CD14-positive monocyte (primary cell): ENCODE measurements at regions of chr1 and their contacts with region 1.

Region 1: GRCh38 chr1:2412519-2413233 is at the start of gene PEX10:
- DNase-seq: peak; percentile 93 to 94 (median 94)
- H3K4me3 ChIP-seq: peak within 1 kb of the TSS; percentile 60 to 91 (median 74)
- H3K4me3 Mint-ChIP-seq: peak within 1 kb of the TSS; percentile 76 to 81
- H3K27ac ChIP-seq: peak within 1 kb of the TSS; percentile 27 to 92
- H3K27ac Mint-ChIP-seq: peak within 1 kb of the TSS; percentile 50 to 86 (median 77)
- H3K4me1 ChIP-seq: peaks cover 24 to 46% of the 10 kb centered on the region in 2 donors
- H3K4me1 Mint-ChIP-seq: peaks cover 19% of the 10 kb centered on the region
- H3K27me3 ChIP-seq: peaks cover 0 to 13% of the 10 kb centered on the region in 2 donors
- H3K27me3 Mint-ChIP-seq: peaks cover 28 to 36% (median 28%) of the 10 kb centered on the region in 3 donors
- CTCF ChIP-seq: no peak
- polyA plus RNA-seq, gene PEX10: 7.0 to 10.5 (median 8.2) TPM

Region 2: DNA sequence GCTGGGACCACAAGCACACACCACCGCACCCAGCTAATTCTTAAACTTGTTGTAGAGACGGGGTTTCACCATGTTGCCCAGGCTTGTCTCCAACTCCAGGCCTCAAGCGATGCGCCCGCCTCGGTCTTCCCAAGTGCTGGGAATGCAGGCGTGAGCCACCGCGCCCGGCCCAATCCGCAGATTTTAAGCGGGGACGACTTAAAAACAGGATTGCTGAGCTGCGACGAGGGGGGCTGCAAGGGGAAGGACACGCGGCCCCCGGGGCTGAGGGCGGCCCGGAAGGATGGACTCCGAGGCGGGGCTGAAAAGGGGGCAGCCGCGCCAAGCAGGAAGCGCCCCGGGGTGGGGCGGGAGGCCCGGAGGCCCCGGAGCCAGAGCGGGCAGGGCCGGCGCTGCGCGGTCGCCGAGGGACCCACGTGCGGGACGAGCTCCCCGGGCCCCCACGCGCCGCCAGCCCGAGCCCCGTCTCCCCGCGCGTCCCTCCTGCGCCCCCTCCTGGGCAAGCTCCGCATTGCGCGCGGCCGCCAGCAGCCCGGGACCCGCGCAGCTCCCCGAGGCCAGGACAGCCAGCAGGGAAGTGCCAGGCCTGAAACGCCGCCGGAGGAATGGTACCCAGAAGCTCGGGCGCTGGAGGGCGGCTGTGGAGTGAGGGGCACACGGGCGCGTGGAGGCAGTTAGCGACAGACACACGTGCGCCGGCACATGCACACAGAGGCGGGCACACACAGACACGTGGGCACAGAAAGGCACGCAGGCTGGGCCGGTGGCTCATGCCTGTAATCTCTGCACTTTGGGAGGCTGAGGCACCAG is 368.0 kb before region 1 on chr1:
- intact Hi-C with region 1: no loop called
- DNase-seq: peak; percentile 33 to 61 (median 41)
- H3K4me3 ChIP-seq: no peak overlapping the region
- H3K4me3 Mint-ChIP-seq: peak overlapping the region in 1 of 2 donors; percentile 83
- H3K27ac ChIP-seq: no peak overlapping the region
- H3K27ac Mint-ChIP-seq: no peak overlapping the region
- H3K4me1 ChIP-seq: peaks cover 6 to 15% of the 10 kb centered on the region in 2 donors
- H3K4me1 Mint-ChIP-seq: peaks cover 10% of the 10 kb centered on the region
- H3K27me3 ChIP-seq: peaks cover 9 to 57% of the 10 kb centered on the region in 2 donors
- H3K27me3 Mint-ChIP-seq: peaks cover 44 to 62% (median 59%) of the 10 kb centered on the region in 3 donors
- CTCF ChIP-seq: peak; percentile 86

Region 3: DNA sequence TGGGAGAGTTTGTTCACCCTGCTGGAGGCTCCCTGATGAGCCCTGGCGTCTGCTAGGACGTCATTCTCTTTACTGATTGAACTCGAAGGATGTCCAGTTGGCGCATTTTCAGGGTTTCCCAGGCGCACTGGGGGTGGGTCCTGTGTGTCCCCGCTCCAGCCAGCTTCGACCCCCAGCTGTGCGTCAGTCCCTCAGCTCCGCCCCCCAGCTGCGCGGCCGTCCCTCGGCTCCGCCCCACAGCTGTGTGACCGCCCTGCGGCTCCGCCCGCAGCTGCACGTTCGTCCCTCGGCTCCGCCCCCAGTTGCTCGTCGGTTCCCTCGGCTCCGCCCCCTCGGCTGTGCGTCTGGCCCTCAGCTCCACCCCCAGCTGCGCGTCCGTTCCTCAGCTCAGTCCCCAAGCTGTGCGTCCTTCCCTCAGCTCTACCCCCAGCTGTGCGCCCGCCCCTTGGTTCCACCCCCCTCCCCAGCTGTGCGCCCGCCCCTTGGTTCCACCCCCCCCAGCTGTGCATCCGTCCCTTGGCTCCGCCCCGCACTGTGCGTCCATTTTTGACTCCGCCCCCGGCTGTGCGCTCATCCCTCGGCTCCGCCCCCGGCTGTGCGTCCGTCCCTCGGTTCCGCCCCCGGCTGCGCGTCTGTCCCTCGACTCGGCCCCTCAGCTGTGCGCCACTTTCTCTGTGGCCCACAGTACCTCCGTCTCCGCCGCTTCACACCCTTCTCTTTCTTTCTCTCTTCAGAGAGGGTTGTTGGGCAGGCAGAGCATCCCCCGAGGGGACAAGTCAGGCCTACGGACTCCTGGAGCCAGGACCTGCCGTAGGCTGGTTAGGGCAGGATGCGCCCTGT is 279.4 kb before region 1 on chr1:
- intact Hi-C with region 1: loop called (anchors 5 kb)
- DNase-seq: peak; percentile 97 to 99 (median 99)
- H3K4me3 ChIP-seq: peak overlapping the region; percentile 36 to 76 (median 40)
- H3K4me3 Mint-ChIP-seq: peak overlapping the region; percentile 81 to 88
- H3K27ac ChIP-seq: peak overlapping the region; percentile 63 to 87
- H3K27ac Mint-ChIP-seq: peak overlapping the region; percentile 93 to 97 (median 95)
- H3K4me1 ChIP-seq: peaks cover 15 to 23% of the 10 kb centered on the region in 2 donors
- H3K4me1 Mint-ChIP-seq: peaks cover 12% of the 10 kb centered on the region
- H3K27me3 ChIP-seq: peaks cover 0 to under 1% of the 10 kb centered on the region in 2 donors
- H3K27me3 Mint-ChIP-seq: peaks cover 7 to 16% (median 13%) of the 10 kb centered on the region in 3 donors
- CTCF ChIP-seq: no peak

Region 4: DNA sequence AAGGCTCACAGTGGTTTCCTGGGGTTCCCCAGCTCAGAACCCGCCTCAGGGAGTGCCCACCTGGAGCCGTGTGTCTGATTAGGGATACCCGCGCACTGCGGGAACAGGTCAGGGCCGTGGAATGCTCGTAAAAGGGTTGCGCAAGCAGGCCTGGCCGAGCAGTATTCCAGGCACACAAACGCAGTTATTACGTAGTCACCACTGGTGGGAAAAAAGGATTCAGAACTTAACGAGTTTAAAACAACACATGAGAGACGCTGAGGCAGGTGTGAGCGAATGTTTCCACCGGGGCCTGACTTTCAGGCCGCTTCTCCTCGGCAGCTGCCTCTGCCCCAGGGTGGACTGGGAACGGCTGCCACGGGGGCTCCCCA is 81.6 kb after region 1 on chr1:
- intact Hi-C with region 1: no loop called
- DNase-seq: no peak
- H3K4me3 ChIP-seq: no peak overlapping the region
- H3K4me3 Mint-ChIP-seq: no peak overlapping the region
- H3K27ac ChIP-seq: no peak overlapping the region
- H3K27ac Mint-ChIP-seq: no peak overlapping the region
- H3K4me1 ChIP-seq: no peaks in the 10 kb centered on the region
- H3K4me1 Mint-ChIP-seq: no peaks in the 10 kb centered on the region
- H3K27me3 ChIP-seq: no peaks in the 10 kb centered on the region
- H3K27me3 Mint-ChIP-seq: peaks cover 1 to 7% (median 6%) of the 10 kb centered on the region in 3 donors
- CTCF ChIP-seq: no peak

Region 5: GRCh38 chr1:2525920-2526823 is 113.5 kb after region 1 on chr1 and contains the start of gene PANK4:
- intact Hi-C with region 1: loop called (anchors 1 to 5 kb)
- DNase-seq: peak; percentile 89
- H3K4me3 ChIP-seq: peak within 1 kb of the TSS; percentile 64 to 91 (median 67)
- H3K4me3 Mint-ChIP-seq: peak within 1 kb of the TSS; percentile 88 to 92
- H3K27ac ChIP-seq: peak within 1 kb of the TSS; percentile 34 to 74
- H3K27ac Mint-ChIP-seq: peak within 1 kb of the TSS; percentile 64 to 98 (median 94)
- H3K4me1 ChIP-seq: peaks cover 31 to 42% of the 10 kb centered on the region in 2 donors
- H3K4me1 Mint-ChIP-seq: peaks cover 31% of the 10 kb centered on the region
- H3K27me3 ChIP-seq: peaks cover 25 to 37% of the 10 kb centered on the region in 2 donors
- H3K27me3 Mint-ChIP-seq: peaks cover 27 to 45% (median 37%) of the 10 kb centered on the region in 3 donors
- CTCF ChIP-seq: no peak
- polyA plus RNA-seq, gene PANK4: 11.9 to 30.2 (median 13.7) TPM

Region 6: DNA sequence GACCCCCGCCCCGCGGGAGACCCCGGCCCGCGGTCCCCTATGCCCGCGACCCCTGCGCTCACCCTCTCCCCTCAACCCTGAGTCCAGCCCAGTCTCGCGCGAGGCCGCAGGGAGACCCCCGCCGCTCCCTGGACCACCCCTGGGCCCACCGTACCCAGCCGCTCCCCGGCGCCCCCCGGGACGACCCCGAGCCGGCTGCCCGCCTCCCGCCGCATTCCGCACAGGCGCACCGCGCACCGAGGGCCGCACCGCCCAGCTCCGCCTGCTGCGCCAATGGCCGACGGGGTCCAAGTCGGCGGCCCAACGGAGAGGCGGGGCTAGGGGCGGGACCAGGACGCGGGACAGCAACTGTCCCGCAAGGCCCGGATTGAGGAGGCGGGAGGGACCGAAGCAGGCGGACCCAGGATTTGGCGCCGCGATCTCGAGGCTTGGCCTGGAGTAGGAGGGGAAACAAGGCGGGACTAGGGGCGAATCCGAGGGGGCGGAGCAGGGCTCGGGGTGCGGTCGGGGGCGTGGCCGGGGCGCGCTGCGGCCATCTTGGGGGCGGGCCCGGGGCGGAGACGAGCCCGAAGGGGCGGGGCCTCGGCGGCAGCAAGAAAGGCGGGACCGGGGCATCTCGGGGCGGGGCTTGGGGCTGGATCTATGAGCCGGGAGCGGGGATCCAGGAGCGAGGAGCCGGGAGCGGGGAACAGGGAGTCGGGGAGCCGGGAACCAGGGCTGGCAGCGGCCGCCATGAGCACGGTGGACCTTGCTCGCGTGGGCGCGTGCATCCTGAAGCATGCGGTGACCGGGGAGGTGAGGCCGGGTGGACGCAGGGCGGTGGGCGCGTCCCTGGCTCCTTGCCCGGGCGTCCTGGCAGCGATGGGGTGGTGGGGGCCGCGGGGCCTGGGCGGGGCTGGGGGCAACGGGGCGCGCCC is 173.7 kb after region 1 on chr1 and contains the start of gene PRXL2B:
- intact Hi-C with region 1: loop called in 1 of 2 experiments (anchors 2 kb)
- DNase-seq: peak; percentile 97 to 100 (median 99)
- H3K4me3 ChIP-seq: peak within 1 kb of the TSS; percentile 58 to 78 (median 67)
- H3K4me3 Mint-ChIP-seq: peak within 1 kb of the TSS; percentile 79 to 88
- H3K27ac ChIP-seq: peak within 1 kb of the TSS; percentile 92 to 96
- H3K27ac Mint-ChIP-seq: peak within 1 kb of the TSS; percentile 93 to 97 (median 96)
- H3K4me1 ChIP-seq: peaks cover 47 to 52% of the 10 kb centered on the region in 2 donors
- H3K4me1 Mint-ChIP-seq: peaks cover 39% of the 10 kb centered on the region
- H3K27me3 ChIP-seq: peaks cover 0 to 8% of the 10 kb centered on the region in 2 donors
- H3K27me3 Mint-ChIP-seq: peaks cover 7 to 20% (median 9%) of the 10 kb centered on the region in 3 donors
- CTCF ChIP-seq: no peak
- polyA plus RNA-seq, gene PRXL2B: 3.6 to 8.8 (median 6.0) TPM

Region 7: DNA sequence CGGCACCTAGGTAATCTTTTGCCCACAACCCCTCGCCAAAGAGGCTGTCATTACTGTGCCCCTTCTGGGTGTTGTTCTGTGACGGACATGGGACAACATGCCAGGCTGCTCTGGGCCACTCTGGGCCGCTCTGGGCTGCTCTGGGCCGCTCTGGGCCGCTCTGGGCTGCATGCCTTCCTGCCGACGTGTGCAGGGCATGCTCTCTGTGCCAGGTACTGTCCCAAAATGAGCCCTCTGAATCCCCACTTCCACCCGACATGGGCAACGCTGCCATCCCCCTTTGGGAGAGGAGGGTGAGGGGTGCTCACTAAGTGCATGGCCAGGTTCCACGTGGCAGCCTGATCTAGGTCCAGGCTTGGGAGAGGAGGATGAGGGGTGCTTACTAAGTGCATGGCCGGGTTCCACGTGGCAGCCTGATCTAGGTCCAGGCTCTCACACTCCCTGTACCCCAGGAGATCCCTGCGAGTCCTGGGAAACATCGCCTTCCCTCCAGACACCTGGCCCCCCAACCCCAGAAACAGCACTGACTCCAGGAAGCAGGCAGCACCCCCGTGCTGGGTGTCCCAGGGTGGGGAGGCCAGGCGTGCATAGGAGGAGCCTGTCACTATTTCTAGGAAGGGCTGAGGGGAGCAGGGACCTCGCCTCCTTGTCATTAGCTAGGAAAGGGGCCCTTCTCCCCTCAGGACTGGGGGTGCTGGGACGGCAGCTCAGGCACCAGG is 372.3 kb after region 1 on chr1:
- intact Hi-C with region 1: loop called in 1 of 2 experiments (anchors 5 kb)
- DNase-seq: no peak
- H3K4me3 ChIP-seq: no peak overlapping the region
- H3K4me3 Mint-ChIP-seq: no peak overlapping the region
- H3K27ac ChIP-seq: no peak overlapping the region
- H3K27ac Mint-ChIP-seq: no peak overlapping the region
- H3K4me1 ChIP-seq: peaks cover 11 to 17% of the 10 kb centered on the region in 2 donors
- H3K4me1 Mint-ChIP-seq: peaks cover 8% of the 10 kb centered on the region
- H3K27me3 ChIP-seq: peaks cover 0 to 12% of the 10 kb centered on the region in 2 donors
- H3K27me3 Mint-ChIP-seq: peaks cover 12 to 34% (median 18%) of the 10 kb centered on the region in 3 donors
- CTCF ChIP-seq: no peak